Left colon (tissue), 2 donors: ENCODE measurements at regions of chr14 and their contacts with region 1.

Region 1: DNA sequence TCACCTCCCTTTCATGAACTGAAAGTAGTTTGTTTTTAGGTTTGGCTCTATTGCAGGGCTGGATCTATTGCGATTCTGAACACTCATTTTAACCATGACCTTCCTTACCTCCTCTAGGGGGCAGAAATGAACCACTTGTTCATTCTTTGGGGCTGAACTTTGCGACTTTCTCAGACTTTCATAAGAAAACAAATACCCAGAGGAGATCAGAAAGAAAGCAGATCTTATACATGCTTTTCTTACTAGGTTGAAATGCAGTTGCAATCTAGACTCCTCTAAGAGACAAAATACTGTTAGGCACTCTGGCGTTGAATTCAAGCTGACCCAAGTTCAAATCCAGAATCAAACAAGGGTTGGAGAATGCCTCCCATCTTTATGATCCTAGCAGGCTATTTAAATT is 32.6 kb upstream of the PLEKHG3 start:
- DNase-seq: no peak
- ATAC-seq: peak; percentile 38

Region 2: GRCh38 chr14:64218344-64219240 is 453.0 kb before region 1 on chr14:
- intact Hi-C with region 1: no loop called
- DNase-seq: no peak
- ATAC-seq: no peak

Region 3: DNA sequence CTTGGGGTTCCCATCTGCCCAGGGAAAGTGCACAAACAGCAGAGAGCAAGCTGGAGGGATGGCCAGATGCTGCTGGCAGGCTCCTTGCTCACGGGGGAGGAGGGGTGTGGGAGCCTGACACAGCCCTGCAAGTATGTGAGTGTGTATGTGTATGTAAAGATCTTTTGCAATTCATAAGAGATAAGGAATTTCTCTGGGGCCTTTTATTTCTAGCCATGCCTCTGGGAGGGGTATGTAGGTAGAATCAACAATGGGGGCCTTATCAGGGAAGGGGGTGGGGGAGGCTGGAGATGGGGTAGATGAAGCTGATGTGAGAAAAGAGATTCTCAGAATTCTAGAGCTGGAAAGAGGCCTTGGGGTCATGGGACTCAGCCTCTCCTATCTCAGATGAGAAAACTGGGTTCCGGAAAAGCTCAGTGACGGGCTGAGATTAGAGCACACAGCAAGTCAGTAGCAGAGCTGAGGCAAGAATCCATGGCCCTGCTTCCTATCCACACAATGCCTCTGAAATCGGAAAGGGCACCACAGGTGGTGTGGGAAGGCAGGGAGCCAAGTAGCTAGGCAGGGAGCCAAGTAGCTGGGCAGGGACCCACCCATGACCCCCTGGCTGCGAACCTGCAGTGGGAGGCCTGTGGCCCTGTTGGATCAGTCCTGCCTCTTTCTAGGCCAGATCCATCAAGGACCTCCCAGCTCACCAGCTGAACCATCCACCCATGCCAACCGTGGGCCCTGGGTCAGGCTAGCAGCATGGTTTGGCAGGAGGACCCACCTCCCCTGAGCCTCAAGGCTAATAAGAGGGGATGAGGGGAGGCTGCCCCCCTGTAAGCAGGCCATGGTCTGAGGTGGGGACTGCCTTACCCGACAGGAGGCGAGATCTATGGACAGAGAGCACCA is 87.3 kb after region 1 on chr14:
- intact Hi-C with region 1: loop called (anchors 5 to 10 kb)
- DNase-seq: no peak
- ATAC-seq: no peak

Region 4: DNA sequence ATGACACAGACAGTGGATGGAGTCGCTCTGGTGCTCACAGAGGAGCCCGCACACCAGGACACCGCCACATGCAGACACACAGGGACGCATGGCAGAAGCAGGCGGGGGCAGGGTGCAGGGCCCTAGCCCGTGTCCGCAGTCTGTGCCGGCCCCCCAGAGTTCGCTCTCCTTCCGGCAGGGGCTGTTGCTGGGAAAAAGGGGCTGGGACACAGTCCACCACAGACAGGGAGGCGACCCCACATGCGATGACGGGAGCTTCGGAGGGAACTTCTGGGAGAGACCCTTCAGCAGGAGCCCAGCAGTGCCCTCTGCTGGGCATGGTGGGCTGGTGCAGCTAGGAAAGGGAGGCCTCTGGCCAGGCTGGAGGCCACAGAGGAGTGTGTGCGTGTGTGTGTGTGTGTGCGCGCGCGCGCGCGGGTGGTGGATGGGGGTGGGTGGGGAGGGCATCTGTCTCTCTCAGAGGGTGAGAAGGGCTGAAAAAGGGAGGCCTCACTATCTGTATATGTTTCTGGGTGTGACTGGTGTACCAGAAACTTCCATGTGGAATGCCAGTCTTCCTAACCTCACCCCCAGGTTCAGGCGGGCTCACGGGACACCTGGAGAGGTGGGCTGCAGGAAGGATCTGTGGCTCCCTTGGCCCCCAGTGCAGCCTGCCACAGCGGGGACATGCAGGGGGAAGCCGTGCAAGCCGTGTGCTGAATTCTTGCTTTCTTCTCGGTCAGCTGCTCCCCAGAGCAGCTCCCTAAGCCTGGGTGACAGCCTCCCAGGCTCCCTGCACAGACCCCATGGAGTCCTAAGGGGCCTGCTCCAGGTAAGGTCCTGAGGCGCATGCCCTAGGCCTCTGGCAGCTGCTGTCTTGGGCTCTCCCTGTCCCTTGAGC is 93.3 kb after region 1 on chr14:
- intact Hi-C with region 1: loop called in 1 of 2 experiments (anchors 5 kb)
- DNase-seq: peak; percentile 58 to 68
- ATAC-seq: peak; percentile 55

Region 5: GRCh38 chr14:64997108-64997794 is 325.7 kb after region 1 on chr14:
- intact Hi-C with region 1: no loop called
- DNase-seq: no peak
- ATAC-seq: peak; percentile 72